ENCODE measurements at regions of chr10 and their contacts with region 1.

Region 1: GRCh38 chr10:119511836-119512515 is 30.5 kb downstream of the RGS10 start:
- DNase-seq: peak in 1 of 35 experiments; percentile 53
- ATAC-seq: no peak
- H3K4me3 ChIP-seq: no peak overlapping the region
- H3K4me3 Mint-ChIP-seq: peak overlapping the region in 1 of 3 donors; percentile 67
- H3K27ac ChIP-seq: no peak overlapping the region
- H3K27ac Mint-ChIP-seq: peak overlapping the region; percentile 87 to 92
- H3K4me1 ChIP-seq: peaks cover 46 to 88% of the 10 kb centered on the region in 2 experiments
- H3K4me1 Mint-ChIP-seq: peaks cover 61 to 65% (median 65%) of the 10 kb centered on the region in 3 donors
- H3K27me3 ChIP-seq: no peaks in the 10 kb centered on the region
- H3K27me3 Mint-ChIP-seq: no peaks in the 10 kb centered on the region

Region 2: DNA sequence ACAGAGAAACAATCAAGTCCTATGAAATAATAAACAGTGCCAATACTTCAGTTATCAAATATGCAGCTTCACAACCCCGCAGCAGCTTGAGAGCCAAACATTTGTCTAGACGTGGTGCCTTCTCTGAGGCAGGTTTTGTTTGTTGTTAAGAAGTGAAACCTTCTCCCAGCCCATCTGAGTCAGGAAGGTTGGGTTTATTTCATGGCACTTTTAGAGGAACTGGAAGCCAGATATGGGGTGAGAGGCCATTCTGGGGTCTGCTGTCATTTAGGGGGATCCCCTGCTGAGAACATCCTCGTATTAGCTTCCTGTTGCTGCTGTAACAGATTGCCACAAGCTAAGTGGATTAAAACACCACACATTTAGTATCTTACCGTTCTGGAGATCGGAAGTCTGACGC is 191.0 kb before region 1 on chr10:
- CTCF ChIA-PET with region 1: no interaction called
- POLR2A ChIA-PET with region 1: no interaction called
- DNase-seq: no peak
- ATAC-seq: no peak
- H3K4me3 ChIP-seq: no peak overlapping the region
- H3K4me3 Mint-ChIP-seq: no peak overlapping the region
- H3K27ac ChIP-seq: no peak overlapping the region
- H3K27ac Mint-ChIP-seq: no peak overlapping the region
- H3K4me1 ChIP-seq: peaks cover 0 to 8% of the 10 kb centered on the region in 2 experiments
- H3K4me1 Mint-ChIP-seq: peaks cover 36 to 51% (median 50%) of the 10 kb centered on the region in 3 donors
- H3K27me3 ChIP-seq: peaks cover 0 to 7% of the 10 kb centered on the region in 2 experiments
- H3K27me3 Mint-ChIP-seq: no peaks in the 10 kb centered on the region

Region 3: GRCh38 chr10:119496273-119496672 is 15.7 kb before region 1 on chr10:
- CTCF ChIA-PET with region 1: interaction called in 1 of 2 experiments, 3 read pairs
- POLR2A ChIA-PET with region 1: interaction called in 1 of 2 experiments, 11 read pairs
- DNase-seq: no peak
- ATAC-seq: peak in 3 of 4 experiments; percentile 13 to 21 (median 20)
- H3K4me3 ChIP-seq: no peak overlapping the region
- H3K4me3 Mint-ChIP-seq: peak overlapping the region in 1 of 3 donors; percentile 33
- H3K27ac ChIP-seq: peak overlapping the region; percentile 45
- H3K27ac Mint-ChIP-seq: peak overlapping the region; percentile 91 to 99
- H3K4me1 ChIP-seq: peaks cover 42 to 82% of the 10 kb centered on the region in 2 experiments
- H3K4me1 Mint-ChIP-seq: peaks cover 79 to 85% (median 82%) of the 10 kb centered on the region in 3 donors
- H3K27me3 ChIP-seq: no peaks in the 10 kb centered on the region
- H3K27me3 Mint-ChIP-seq: no peaks in the 10 kb centered on the region